ENCODE measurements at regions of chr14 and their contacts with region 1.

Region 1: GRCh38 chr14:22929104-22929847 is at the start of gene PRMT5:
- H3K4me3 ChIP-seq: peak within 1 kb of the TSS; percentile 78
- H3K27ac ChIP-seq: peak within 1 kb of the TSS; percentile 55; the same call in 1 of the 2 replicates
- H3K4me1 ChIP-seq: no peaks in the 10 kb centered on the region
- CTCF ChIP-seq: no peak

Region 2: DNA sequence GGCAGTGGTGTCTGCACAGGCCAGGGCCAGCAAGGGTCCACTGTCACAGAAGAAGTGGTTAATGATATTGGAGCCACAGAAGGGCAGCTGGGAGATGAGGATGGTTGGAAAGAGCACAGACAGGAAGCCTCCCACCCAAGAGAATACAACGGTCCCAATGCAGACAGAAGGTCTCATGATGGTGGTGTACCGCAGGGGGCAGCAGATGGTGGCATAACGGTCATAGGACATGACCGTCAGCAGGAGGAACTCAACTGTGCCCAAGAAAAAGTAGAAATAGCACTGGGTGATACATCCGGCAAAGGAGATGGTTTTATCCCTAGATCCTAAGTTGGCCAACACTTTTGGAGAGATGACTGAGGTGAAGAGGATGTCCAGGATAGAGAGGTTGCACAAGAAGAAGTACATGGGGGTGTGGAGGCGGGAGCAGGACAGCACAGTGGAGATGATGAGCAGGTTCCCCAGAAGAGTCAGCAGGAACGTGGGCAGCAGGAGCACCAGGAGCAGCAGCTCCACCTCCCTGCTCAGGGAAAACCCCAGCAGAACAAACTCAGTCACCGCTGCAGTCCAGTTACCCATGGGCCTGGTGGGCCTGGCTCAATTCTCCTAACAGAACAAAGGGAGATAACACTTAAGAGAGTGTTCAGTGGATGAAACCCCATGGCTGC is 294.9 kb before region 1 on chr14:
- CTCF ChIA-PET with region 1: no interaction called
- POLR2A ChIA-PET with region 1: no interaction called
- H3K4me3 ChIP-seq: no peak overlapping the region
- H3K27ac ChIP-seq: no peak overlapping the region
- H3K4me1 ChIP-seq: no peaks in the 10 kb centered on the region
- CTCF ChIP-seq: no peak

Region 3: GRCh38 chr14:22791301-22791700 is 138.0 kb before region 1 on chr14:
- CTCF ChIA-PET with region 1: no interaction called
- POLR2A ChIA-PET with region 1: no interaction called
- H3K4me3 ChIP-seq: no peak overlapping the region
- H3K27ac ChIP-seq: no peak overlapping the region
- H3K4me1 ChIP-seq: no peaks in the 10 kb centered on the region
- CTCF ChIP-seq: no peak

Region 4: DNA sequence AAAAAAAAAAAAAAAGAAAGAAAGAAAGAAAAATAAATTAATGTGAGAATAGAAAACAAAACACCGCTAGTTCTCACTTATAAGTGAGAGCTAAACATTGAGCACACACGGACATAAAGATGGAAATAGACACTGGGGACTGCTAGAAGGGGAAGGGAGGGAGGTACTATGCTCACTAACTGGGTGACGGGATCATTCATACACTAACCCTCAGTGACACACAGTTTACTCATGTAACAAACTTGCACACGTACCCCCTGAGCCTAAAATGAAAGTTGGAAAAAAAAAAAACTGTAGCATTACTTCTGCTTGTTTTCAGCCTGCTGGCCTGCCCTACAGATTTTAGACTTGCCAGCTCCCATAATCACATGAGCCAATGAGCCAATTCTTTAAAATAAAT is 10.4 kb after region 1 on chr14:
- CTCF ChIA-PET with region 1: interaction called, 32 read pairs
- POLR2A ChIA-PET with region 1: no interaction called
- H3K4me3 ChIP-seq: no peak overlapping the region
- H3K27ac ChIP-seq: no peak overlapping the region
- H3K4me1 ChIP-seq: no peaks in the 10 kb centered on the region
- CTCF ChIP-seq: no peak

Region 5: DNA sequence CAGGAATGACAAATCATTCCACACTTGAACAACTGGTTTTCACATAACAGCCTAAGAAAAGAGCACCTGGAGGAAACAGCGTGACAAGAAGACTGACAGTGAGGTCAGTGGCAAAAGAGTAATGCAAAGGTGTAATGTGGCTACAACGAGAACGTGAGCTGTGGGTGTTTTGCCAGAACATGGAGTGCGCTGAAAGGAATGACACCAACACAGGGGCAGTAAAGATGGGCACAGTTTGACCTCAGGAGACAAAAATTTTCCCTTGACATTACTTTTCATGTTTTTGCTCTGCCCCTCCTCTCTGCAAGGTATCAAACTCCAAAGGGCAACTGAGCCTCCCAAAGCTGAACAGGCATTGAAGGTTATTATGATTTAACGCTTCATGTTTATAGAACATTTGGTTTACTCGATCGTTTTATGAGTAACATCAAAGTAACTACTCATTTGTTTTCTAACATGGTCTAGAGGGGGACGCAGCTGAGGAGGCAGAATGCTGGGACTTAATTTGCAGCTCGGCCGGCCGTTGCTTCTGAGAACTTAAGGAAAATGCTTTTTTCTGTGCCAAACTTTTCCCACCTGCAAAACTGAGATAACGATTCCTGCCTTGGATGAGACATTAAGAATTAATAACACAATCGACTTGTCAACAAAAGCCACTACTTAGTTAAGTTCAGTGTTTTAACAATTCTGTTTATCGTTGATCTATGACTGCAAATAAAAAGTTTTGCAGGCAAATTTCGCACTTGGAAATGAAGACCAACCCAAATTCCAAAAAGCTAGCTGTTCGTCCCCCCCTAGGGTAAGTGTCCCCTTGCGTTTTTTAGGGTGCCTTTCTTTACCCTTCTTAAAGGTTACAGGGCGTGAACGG is 26.7 kb after region 1 on chr14:
- CTCF ChIA-PET with region 1: interaction called, 13 read pairs
- POLR2A ChIA-PET with region 1: interaction called, 30 read pairs
- H3K4me3 ChIP-seq: peak overlapping the region; percentile 75
- H3K27ac ChIP-seq: peak overlapping the region; percentile 76; the same call in 1 of the 2 replicates
- H3K4me1 ChIP-seq: no peaks in the 10 kb centered on the region
- CTCF ChIP-seq: no peak

Region 6: GRCh38 chr14:22994762-22995275 is 65.5 kb after region 1 on chr14:
- CTCF ChIA-PET with region 1: interaction called, 12 read pairs
- POLR2A ChIA-PET with region 1: no interaction called
- H3K4me3 ChIP-seq: no peak overlapping the region
- H3K27ac ChIP-seq: no peak overlapping the region
- H3K4me1 ChIP-seq: peaks cover 7% of the 10 kb centered on the region
- CTCF ChIP-seq: no peak